Dorsolateral prefrontal cortex (tissue), 120 donors: ENCODE measurements at regions of chr14 and their contacts with region 1.

Region 1: DNA sequence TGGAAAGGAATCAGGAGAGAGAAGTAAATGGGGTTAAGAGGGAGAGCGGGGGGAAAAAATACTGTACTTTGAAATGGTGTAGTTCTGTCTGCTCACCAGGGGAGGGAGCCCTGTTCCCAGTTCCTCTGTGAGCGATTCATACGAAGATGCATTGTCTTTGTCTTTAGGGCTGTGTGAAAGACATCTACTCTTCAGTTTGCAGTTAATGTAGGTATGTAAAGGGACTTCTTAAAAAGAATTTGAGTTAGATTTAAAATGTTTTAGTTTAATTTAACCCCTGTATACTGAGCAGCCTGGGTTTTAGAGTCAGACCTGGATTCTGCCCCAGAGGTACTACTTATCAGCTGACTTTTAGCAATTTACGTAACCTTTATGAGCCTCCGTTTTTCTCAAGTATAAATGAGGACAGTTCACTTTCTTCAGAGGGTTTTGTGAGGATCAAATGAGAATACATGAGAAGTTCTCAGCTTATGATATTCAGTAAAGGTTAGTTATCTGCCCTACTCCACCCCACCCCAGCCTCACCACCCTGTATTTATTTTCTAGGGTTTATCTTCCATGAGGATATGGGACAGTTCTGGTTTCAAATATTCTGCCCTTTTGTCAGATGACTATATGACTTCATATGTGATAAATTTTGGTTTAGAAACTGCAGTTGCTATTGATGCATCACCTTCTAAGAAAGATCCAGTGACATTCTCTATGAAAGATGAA is 82.5 kb upstream of the EVL start:
- DNase-seq: peak in 5 of 10 donors; percentile 43 to 66 (median 57)
- H3K4me3 ChIP-seq: peak overlapping the region in 5 of 59 donors; percentile 3 to 31 (median 11)
- H3K27ac ChIP-seq: peak overlapping the region in 10 of 59 donors; percentile 4 to 57 (median 34)
- H3K27me3 ChIP-seq: no peaks in the 10 kb centered on the region
- CTCF ChIP-seq: peak; percentile 80 to 98 (median 92)

Region 2: DNA sequence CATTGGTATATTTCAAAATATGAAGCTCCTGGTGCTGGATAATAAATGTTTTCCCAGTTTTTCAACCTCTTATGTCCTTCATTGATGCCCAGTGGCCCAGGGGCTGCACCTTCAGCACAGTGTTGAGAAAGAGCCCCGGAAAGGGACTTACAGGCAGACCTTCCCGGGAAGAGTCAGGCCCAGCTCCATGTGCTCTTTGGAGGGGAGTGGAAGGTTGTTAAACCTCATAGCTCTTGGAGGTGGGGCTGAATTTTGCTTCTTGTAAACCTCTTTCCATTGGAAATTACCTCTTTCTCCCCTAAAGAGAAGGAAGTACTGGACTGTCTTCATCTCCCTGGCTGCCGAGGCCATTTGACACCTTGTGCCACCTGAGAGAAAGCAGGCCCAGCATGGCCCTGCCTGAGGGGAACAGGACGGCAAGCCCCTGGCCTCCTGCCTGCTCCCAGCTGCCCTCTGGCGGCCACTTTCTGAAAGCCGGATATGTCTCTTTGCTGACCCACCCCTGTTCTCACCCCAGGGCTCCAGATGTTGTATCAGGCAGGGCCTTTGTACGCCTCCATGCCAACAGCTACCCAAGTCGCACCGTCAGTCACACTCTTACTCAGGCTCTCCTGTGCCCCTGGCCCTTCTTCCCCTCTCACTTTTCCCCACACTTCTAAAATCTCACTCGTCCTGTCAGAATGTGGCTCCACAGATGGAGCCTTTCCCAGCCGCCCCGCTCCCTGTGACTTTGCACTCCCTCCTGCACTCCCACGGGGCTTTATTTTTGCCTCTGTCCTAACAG is 125.5 kb after region 1 on chr14:
- intact Hi-C with region 1: loop called (anchors 5 kb)
- DNase-seq: peak; percentile 77 to 87 (median 81)
- H3K4me3 ChIP-seq: peak overlapping the region in 1 of 59 donors; percentile 23
- H3K27ac ChIP-seq: peak overlapping the region; percentile 0 to 89 (median 75)
- H3K27me3 ChIP-seq: no peaks in the 10 kb centered on the region
- CTCF ChIP-seq: peak; percentile 70 to 94 (median 88)